ENCODE measurements at regions of chr12 and their contacts with region 1.

Region 1: GRCh38 chr12:848173-848865 is 95.9 kb downstream of the WNK1 start:
- DNase-seq: no peak
- H3K27ac ChIP-seq: peak overlapping the region; percentile 54; the same call in 1 of the 2 replicates
- CTCF ChIP-seq: no peak

Region 2: DNA sequence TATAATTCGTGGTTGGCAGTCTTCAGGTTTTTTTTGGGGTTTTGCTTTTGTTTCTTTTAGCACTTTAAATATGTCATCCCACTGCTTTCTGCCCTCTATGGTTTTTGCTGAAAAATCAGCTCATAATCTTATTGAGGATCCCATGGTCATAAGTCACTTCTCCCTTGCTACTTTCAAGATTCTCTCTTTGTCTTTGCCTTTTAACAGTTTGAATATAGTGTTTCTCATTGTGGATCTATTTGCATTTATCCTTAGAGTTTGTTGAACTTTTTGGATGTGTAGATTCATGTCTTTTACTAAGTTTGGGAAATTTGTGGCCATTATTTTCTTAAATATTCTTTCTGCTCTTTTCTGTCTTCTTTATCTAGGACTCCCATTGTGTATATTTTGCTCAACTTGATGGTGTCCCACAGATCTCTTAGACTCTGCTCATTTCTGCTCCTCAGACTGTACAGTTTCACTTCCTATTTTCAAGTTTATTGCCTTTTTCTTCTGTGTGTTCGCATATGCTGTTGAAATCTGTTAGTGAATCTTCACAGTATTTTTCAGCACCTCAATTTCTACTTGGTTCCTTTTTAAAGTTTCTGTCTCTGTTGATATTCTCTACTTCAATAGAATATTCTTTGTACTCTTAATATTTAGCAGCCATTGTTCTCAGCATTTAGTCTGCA is 25.2 kb before region 1 on chr12:
- CTCF ChIA-PET with region 1: interaction called, 11 read pairs
- POLR2A ChIA-PET with region 1: no interaction called
- DNase-seq: no peak
- H3K27ac ChIP-seq: no peak overlapping the region
- CTCF ChIP-seq: no peak

Region 3: DNA sequence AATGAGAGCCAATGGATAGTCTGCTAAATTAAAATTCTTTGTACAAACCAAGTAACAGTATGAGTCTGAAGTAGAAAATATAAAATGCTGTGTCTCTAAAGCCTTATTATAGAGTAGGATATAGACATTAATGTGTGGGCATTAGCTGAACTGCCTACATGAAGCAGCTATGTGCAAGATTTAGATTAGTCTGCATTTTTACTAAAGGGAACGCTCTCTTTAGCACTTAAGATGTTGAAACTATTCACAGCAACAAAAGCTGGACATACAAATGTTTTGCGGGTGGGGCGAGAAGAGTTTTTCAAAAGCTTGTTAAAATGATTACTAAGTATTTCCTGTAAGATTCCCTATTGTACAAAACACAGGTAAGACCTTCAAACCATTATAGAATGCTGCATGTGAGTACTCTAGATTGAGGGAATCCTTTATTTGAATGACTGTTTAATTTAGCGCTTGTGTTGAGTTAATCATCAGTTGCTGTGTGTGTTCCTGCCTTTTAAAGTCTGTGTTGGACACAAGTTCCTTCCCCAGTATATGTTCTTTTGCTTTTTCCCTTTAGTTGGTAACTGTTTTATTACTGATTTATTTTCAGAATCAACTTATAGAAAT is 14.1 kb after region 1 on chr12:
- CTCF ChIA-PET with region 1: no interaction called
- POLR2A ChIA-PET with region 1: no interaction called
- DNase-seq: no peak
- H3K27ac ChIP-seq: no peak overlapping the region
- CTCF ChIP-seq: no peak

Region 4: GRCh38 chr12:936377-937345 is 88.3 kb after region 1 on chr12:
- CTCF ChIA-PET with region 1: no interaction called
- POLR2A ChIA-PET with region 1: no interaction called
- DNase-seq: no peak
- H3K27ac ChIP-seq: no peak overlapping the region
- CTCF ChIP-seq: no peak

Region 5: GRCh38 chr12:1030779-1031178 is 182.5 kb after region 1 on chr12:
- CTCF ChIA-PET with region 1: no interaction called
- POLR2A ChIA-PET with region 1: no interaction called
- DNase-seq: no peak
- H3K27ac ChIP-seq: no peak overlapping the region
- CTCF ChIP-seq: no peak

Region 6: GRCh38 chr12:1054117-1054870 is 206.0 kb after region 1 on chr12:
- CTCF ChIA-PET with region 1: no interaction called
- POLR2A ChIA-PET with region 1: no interaction called
- DNase-seq: no peak
- H3K27ac ChIP-seq: no peak overlapping the region
- CTCF ChIP-seq: no peak

Measured in RWPE1 (cell line).